ENCODE measurements at regions of chr5 and their contacts with region 1.

Region 1: GRCh38 chr5:73448463-73449136 is at the start of gene FOXD1:
- DNase-seq: peak; percentile 77 to 95
- ATAC-seq: peak; percentile 78 to 94
- H3K4me3 ChIP-seq: peak within 1 kb of the TSS; percentile 67
- H3K27ac ChIP-seq: peak within 1 kb of the TSS; percentile 89 to 94
- H3K4me1 ChIP-seq: peaks cover 19% of the 10 kb centered on the region
- CTCF ChIP-seq: no peak
- EP300 ChIP-seq: no peak
- POLR2A ChIP-seq: peak; percentile 82
- RAD21 ChIP-seq: no peak
- polyA plus RNA-seq, gene FOXD1: 1.8 and 2.2 TPM in 2 replicates

Region 2: GRCh38 chr5:72955768-72956323 is 492.8 kb before region 1 on chr5 and contains the start of gene FCHO2:
- CTCF ChIA-PET with region 1: interaction called, 12 read pairs
- POLR2A ChIA-PET with region 1: interaction called, 8 read pairs
- DNase-seq: peak; percentile 95 to 97
- ATAC-seq: peak; percentile 85 to 93
- H3K4me3 ChIP-seq: peak within 1 kb of the TSS; percentile 94
- H3K27ac ChIP-seq: peak within 1 kb of the TSS; percentile 96 to 97
- H3K4me1 ChIP-seq: peaks cover 49% of the 10 kb centered on the region
- CTCF ChIP-seq: peak; percentile 79
- EP300 ChIP-seq: no peak
- POLR2A ChIP-seq: peak; percentile 70
- RAD21 ChIP-seq: peak; percentile 62 to 73
- polyA plus RNA-seq, gene FCHO2: 14.9 and 20.2 TPM in 2 replicates

Region 3: GRCh38 chr5:73088026-73088425 is 360.6 kb before region 1 on chr5:
- CTCF ChIA-PET with region 1: interaction called, 20 read pairs
- POLR2A ChIA-PET with region 1: interaction called, 5 read pairs
- DNase-seq: no peak
- ATAC-seq: peak in 1 of 2 experiments; percentile 39; a peak in 1 of 6 replicates
- H3K4me3 ChIP-seq: no peak overlapping the region
- H3K27ac ChIP-seq: peak overlapping the region in 1 of 2 experiments; percentile 13; a peak in 2 of 6 replicates
- H3K4me1 ChIP-seq: peaks cover 22% of the 10 kb centered on the region
- CTCF ChIP-seq: no peak
- EP300 ChIP-seq: no peak
- POLR2A ChIP-seq: no peak
- RAD21 ChIP-seq: no peak

Region 4: DNA sequence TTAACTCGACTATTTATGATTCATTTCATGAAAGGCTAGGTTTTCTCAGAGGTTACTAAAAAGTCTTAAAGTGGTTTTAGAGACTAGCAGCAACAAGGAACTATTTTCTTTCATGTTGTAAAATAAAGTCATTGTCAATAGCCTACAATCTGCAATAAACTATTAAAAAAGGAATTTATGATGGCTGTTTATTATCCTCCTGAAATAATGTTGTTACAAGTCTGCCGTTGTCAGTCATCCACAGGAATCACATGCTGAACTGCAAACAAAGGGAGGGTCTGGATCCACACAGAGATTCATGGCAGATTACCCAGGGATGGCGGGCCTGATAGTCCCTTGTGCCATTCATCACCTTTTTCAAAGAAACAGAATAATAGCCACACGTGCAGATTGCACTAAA is 226.4 kb before region 1 on chr5:
- CTCF ChIA-PET with region 1: interaction called, 155 read pairs
- POLR2A ChIA-PET with region 1: interaction called, 86 read pairs
- DNase-seq: no peak
- ATAC-seq: no peak
- H3K4me3 ChIP-seq: no peak overlapping the region
- H3K27ac ChIP-seq: no peak overlapping the region
- H3K4me1 ChIP-seq: peaks cover 6% of the 10 kb centered on the region; the same call in 1 of the 3 replicates
- CTCF ChIP-seq: no peak
- EP300 ChIP-seq: no peak
- POLR2A ChIP-seq: no peak
- RAD21 ChIP-seq: no peak

Region 5: GRCh38 chr5:73303148-73304079 is 145.2 kb before region 1 on chr5:
- CTCF ChIA-PET with region 1: interaction called, 13 read pairs
- POLR2A ChIA-PET with region 1: interaction called, 7 read pairs
- DNase-seq: peak; percentile 33 to 54
- ATAC-seq: peak; percentile 64 to 83
- H3K4me3 ChIP-seq: peak overlapping the region; percentile 47
- H3K27ac ChIP-seq: peak overlapping the region; percentile 59 to 86
- H3K4me1 ChIP-seq: no peaks in the 10 kb centered on the region
- CTCF ChIP-seq: peak; percentile 47
- EP300 ChIP-seq: no peak
- POLR2A ChIP-seq: no peak
- RAD21 ChIP-seq: peak; percentile 42 to 45; a peak in 4 of 5 replicates

Region 6: GRCh38 chr5:73437101-73437776 is 11.4 kb before region 1 on chr5:
- CTCF ChIA-PET with region 1: interaction called, 34 read pairs
- POLR2A ChIA-PET with region 1: interaction called, 13 read pairs
- DNase-seq: peak; percentile 79 to 88
- ATAC-seq: peak; percentile 93 to 97
- H3K4me3 ChIP-seq: peak overlapping the region; percentile 45
- H3K27ac ChIP-seq: peak overlapping the region; percentile 68 to 86
- H3K4me1 ChIP-seq: peaks cover 11% of the 10 kb centered on the region
- CTCF ChIP-seq: peak; percentile 76
- EP300 ChIP-seq: no peak
- POLR2A ChIP-seq: no peak
- RAD21 ChIP-seq: peak; percentile 47 to 70; a peak in 4 of 5 replicates

Region 7: DNA sequence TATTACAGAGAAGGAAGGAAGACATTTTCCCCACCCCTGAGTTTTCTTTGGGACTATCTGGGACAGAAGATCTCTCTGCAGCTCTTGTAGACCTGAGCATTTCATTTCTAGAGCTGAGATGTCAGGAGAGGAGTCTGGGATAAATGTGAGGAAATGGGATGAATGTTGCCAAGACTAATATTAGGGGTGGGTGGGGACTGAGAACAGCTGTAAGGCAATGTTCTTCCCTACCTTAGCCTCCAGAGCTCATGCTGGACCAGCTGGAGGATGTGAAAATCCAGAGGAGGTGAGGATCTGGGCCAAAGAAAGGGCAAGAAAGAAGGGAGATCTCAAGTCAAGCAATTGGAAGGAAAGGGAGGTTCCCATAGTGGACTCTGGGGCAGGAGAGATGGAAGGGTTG is 23.1 kb after region 1 on chr5:
- CTCF ChIA-PET with region 1: interaction called, 22 read pairs
- POLR2A ChIA-PET with region 1: no interaction called
- DNase-seq: no peak
- ATAC-seq: no peak
- H3K4me3 ChIP-seq: no peak overlapping the region
- H3K27ac ChIP-seq: no peak overlapping the region
- H3K4me1 ChIP-seq: no peaks in the 10 kb centered on the region
- CTCF ChIP-seq: no peak
- EP300 ChIP-seq: no peak
- POLR2A ChIP-seq: no peak
- RAD21 ChIP-seq: no peak

Region 8: GRCh38 chr5:73654171-73654811 is 205.7 kb after region 1 on chr5:
- CTCF ChIA-PET with region 1: no interaction called
- POLR2A ChIA-PET with region 1: no interaction called
- DNase-seq: peak in 1 of 2 experiments; percentile 31
- ATAC-seq: peak; percentile 22 to 44; a peak in 3 of 6 replicates
- H3K4me3 ChIP-seq: no peak overlapping the region
- H3K27ac ChIP-seq: peak overlapping the region; percentile 29 to 78; a peak in 3 of 6 replicates
- H3K4me1 ChIP-seq: peaks cover 32% of the 10 kb centered on the region
- CTCF ChIP-seq: no peak
- EP300 ChIP-seq: no peak
- POLR2A ChIP-seq: no peak
- RAD21 ChIP-seq: no peak

Region 9: GRCh38 chr5:73751254-73751914 is 302.8 kb after region 1 on chr5:
- CTCF ChIA-PET with region 1: no interaction called
- POLR2A ChIA-PET with region 1: no interaction called
- DNase-seq: no peak
- ATAC-seq: no peak
- H3K4me3 ChIP-seq: no peak overlapping the region
- H3K27ac ChIP-seq: no peak overlapping the region
- H3K4me1 ChIP-seq: peaks cover 18% of the 10 kb centered on the region
- CTCF ChIP-seq: no peak
- EP300 ChIP-seq: no peak
- POLR2A ChIP-seq: no peak
- RAD21 ChIP-seq: no peak